ENCODE measurements at regions of chr3 and their contacts with region 1.

Region 1: DNA sequence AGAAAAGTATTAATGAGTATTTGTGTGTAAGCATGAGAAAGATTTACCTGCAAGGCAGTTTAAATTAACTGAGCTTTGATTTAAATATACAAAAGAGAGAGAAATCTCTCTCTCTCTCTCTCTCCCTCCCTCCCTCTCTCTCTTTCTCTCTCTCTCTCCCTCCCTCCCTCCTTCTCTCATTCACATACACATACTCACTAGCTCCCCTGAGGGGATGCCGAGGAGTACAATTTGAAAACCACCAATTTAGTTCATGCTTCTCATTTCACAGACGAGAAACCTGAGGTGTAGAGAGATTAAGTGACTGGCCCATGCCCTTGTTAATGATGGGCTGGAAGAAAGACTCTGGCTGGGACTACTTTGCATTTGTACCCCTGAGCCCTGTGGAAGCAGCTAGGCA is 59.4 kb downstream of the MECOM start:
- DNase-seq: no peak
- ATAC-seq: no peak
- H3K4me3 ChIP-seq: no peak overlapping the region
- H3K4me3 Mint-ChIP-seq: no peak overlapping the region
- H3K27ac ChIP-seq: no peak overlapping the region
- H3K27ac Mint-ChIP-seq: no peak overlapping the region
- H3K4me1 ChIP-seq: no peaks in the 10 kb centered on the region
- H3K4me1 Mint-ChIP-seq: no peaks in the 10 kb centered on the region
- H3K27me3 ChIP-seq: no peaks in the 10 kb centered on the region
- H3K27me3 Mint-ChIP-seq: peaks cover 8 to 14% of the 10 kb centered on the region in 2 donors

Region 2: GRCh38 chr3:169564883-169565282 is 39.2 kb before region 1 on chr3:
- CTCF ChIA-PET with region 1: no interaction called
- POLR2A ChIA-PET with region 1: no interaction called
- DNase-seq: no peak
- ATAC-seq: no peak
- H3K4me3 ChIP-seq: no peak overlapping the region
- H3K4me3 Mint-ChIP-seq: no peak overlapping the region
- H3K27ac ChIP-seq: no peak overlapping the region
- H3K27ac Mint-ChIP-seq: no peak overlapping the region
- H3K4me1 ChIP-seq: no peaks in the 10 kb centered on the region
- H3K4me1 Mint-ChIP-seq: no peaks in the 10 kb centered on the region
- H3K27me3 ChIP-seq: peaks cover 0 to 6% of the 10 kb centered on the region in 2 experiments
- H3K27me3 Mint-ChIP-seq: peaks cover 16 to 17% of the 10 kb centered on the region in 2 donors

Region 3: GRCh38 chr3:169931747-169932520 is 327.8 kb after region 1 on chr3:
- CTCF ChIA-PET with region 1: no interaction called
- POLR2A ChIA-PET with region 1: interaction called in 1 of 2 experiments, 11 read pairs
- DNase-seq: no peak
- ATAC-seq: no peak
- H3K4me3 ChIP-seq: no peak overlapping the region
- H3K4me3 Mint-ChIP-seq: no peak overlapping the region
- H3K27ac ChIP-seq: no peak overlapping the region
- H3K27ac Mint-ChIP-seq: no peak overlapping the region
- H3K4me1 ChIP-seq: no peaks in the 10 kb centered on the region
- H3K4me1 Mint-ChIP-seq: peaks cover 0 to 6% (median 0%) of the 10 kb centered on the region in 3 donors
- H3K27me3 ChIP-seq: peaks cover 0 to 4% of the 10 kb centered on the region in 2 experiments
- H3K27me3 Mint-ChIP-seq: peaks cover 9 to 19% of the 10 kb centered on the region in 2 donors

Region 4: GRCh38 chr3:171248425-171249111 is 1644.5 kb after region 1 on chr3:
- CTCF ChIA-PET with region 1: no interaction called
- POLR2A ChIA-PET with region 1: no interaction called
- DNase-seq: no peak
- ATAC-seq: peak in 2 of 4 experiments; percentile 41 to 66
- H3K4me3 ChIP-seq: no peak overlapping the region
- H3K4me3 Mint-ChIP-seq: no peak overlapping the region
- H3K27ac ChIP-seq: peak overlapping the region; percentile 30
- H3K27ac Mint-ChIP-seq: no peak overlapping the region
- H3K4me1 ChIP-seq: peaks cover 45 to 50% of the 10 kb centered on the region in 2 experiments
- H3K4me1 Mint-ChIP-seq: peaks cover 20 to 33% (median 27%) of the 10 kb centered on the region in 3 donors
- H3K27me3 ChIP-seq: no peaks in the 10 kb centered on the region
- H3K27me3 Mint-ChIP-seq: no peaks in the 10 kb centered on the region

Measured in T-cell (primary cell).